ENCODE measurements at regions of chr2 and their contacts with region 1.

Region 1: DNA sequence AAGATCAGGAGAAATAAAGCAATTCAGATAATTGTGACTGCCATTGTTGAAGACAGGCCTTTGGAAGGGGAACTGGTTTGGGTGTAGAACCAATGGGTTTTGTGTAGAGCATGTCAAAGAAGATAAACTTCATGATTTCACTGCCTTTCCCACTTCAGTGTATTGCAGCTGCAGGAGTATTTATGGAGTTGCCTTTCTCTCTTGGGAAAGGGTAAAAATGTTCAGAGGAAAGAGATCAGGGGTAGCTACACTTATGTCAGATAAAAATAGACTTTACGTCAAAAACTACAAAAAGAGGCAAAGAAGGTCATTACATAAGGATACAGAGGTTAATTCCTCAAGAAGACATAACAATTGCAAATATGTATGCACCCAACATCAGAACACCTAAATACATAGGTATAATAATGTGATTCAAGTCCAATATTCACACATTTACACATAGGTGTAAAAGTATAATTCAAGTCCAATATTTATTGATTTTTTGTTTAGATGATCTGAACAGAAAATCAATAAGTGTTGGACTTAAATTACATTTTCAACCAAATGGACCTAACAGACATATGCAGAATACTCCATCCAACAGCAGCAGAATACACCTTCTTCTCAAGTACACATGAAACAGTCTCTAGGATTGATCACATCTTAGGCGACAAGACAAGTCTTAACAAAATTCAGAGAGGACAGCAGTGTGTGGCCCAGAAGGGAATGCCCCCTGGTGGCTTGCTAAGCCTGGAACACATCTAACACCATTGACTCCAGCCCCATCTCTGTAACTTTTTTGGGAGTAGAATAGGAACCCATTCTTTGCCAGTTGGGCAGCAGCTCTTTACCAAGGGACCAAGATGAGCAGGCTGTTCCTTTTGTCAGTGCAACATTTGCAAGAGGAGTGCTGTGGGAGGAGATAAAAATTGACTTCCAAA is 249.6 kb downstream of the PLCL1 start:
- DNase-seq: peak; percentile 46
- H3K4me3 Mint-ChIP-seq: no peak overlapping the region
- H3K27ac Mint-ChIP-seq: no peak overlapping the region
- H3K4me1 Mint-ChIP-seq: no peaks in the 10 kb centered on the region
- H3K27me3 Mint-ChIP-seq: no peaks in the 10 kb centered on the region
- CTCF ChIP-seq: peak; percentile 27

Region 2: GRCh38 chr2:197804049-197804757 is 249.8 kb before region 1 on chr2 and contains the start of gene PLCL1:
- CTCF ChIA-PET with region 1: interaction called, 4 read pairs
- POLR2A ChIA-PET with region 1: no interaction called
- intact Hi-C with region 1: loop called (anchors 1 kb)
- DNase-seq: peak; percentile 92
- H3K4me3 Mint-ChIP-seq: peak within 1 kb of the TSS; percentile 74
- H3K27ac Mint-ChIP-seq: peak within 1 kb of the TSS; percentile 73
- H3K4me1 Mint-ChIP-seq: peaks cover 6% of the 10 kb centered on the region
- H3K27me3 Mint-ChIP-seq: peaks cover 18% of the 10 kb centered on the region
- CTCF ChIP-seq: no peak
- total RNA-seq, gene PLCL1: 0.12 and 0.22 TPM in 2 replicates

Region 3: DNA sequence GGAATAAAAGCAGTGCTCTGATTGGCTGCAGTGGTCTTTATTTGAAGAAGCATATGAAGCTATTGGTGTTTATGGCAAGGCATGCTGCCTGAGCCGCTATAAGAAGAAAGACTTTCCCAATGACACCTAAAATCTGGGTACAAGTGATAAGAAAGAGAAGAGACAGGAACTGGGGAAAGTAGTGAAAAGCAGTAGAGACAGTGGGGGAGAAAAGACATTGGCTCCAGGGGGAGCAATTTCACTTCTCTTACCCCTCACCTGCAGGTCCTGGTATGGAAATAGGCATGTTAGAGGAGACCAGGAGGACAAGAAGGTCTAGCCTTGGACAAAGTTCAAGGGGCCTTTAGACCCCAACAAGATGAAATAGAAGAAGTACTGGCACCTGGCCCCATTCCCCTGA is 202.6 kb before region 1 on chr2:
- CTCF ChIA-PET with region 1: no interaction called
- POLR2A ChIA-PET with region 1: no interaction called
- intact Hi-C with region 1: loop called (anchors 1 kb)
- DNase-seq: peak; percentile 40
- H3K4me3 Mint-ChIP-seq: no peak overlapping the region
- H3K27ac Mint-ChIP-seq: no peak overlapping the region
- H3K4me1 Mint-ChIP-seq: peaks cover 14% of the 10 kb centered on the region
- H3K27me3 Mint-ChIP-seq: no peaks in the 10 kb centered on the region
- CTCF ChIP-seq: peak; percentile 11

Region 4: GRCh38 chr2:197946562-197946961 is 107.5 kb before region 1 on chr2:
- CTCF ChIA-PET with region 1: no interaction called
- POLR2A ChIA-PET with region 1: no interaction called
- intact Hi-C with region 1: no loop called
- DNase-seq: peak; percentile 74
- H3K4me3 Mint-ChIP-seq: no peak overlapping the region
- H3K27ac Mint-ChIP-seq: no peak overlapping the region
- H3K4me1 Mint-ChIP-seq: peaks cover 28% of the 10 kb centered on the region
- H3K27me3 Mint-ChIP-seq: peaks cover 22% of the 10 kb centered on the region
- CTCF ChIP-seq: no peak